ENCODE measurements at regions of chr3 and their contacts with region 1.

Region 1: GRCh38 chr3:139561959-139562676 is 22.6 kb upstream of the RBP1 start:
- DNase-seq: peak; percentile 47 to 55
- H3K4me3 ChIP-seq: no peak overlapping the region
- H3K27ac ChIP-seq: no peak overlapping the region
- H3K4me1 ChIP-seq: peaks cover 33% of the 10 kb centered on the region
- H3K27me3 ChIP-seq: no peaks in the 10 kb centered on the region
- CTCF ChIP-seq: peak; percentile 83

Region 2: DNA sequence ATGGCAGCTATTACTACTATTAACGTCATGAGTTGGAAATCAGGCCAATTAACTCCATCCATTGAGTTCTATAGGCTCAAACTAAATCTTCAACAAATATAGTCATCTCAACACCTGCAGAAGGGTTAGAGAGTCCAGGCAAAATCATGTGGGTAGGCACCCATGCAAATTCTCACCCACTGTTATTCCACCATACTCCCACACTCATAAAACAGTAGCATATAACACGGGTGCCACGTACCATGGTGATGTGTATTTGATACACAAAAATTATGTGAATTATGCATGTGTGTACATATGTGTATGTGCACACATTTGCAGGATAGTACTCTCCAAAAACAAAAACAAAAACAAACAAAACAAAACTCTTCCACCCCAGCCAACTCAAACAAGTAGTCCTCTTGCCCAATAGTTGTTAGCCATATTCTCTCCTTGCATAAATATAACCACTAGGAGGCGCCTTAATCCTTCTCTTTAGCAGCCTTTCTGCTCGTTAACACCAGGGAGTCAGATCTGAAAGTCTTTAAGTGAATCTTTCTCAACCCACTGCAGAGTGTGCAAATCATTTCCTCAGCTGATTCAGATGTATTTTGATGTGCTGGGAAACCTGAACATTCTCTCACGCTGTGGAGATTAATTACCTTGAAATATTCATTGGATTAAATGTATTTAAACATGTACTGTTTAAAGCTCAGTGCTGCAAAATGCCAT is 134.7 kb before region 1 on chr3:
- CTCF ChIA-PET with region 1: interaction called, 11 read pairs
- POLR2A ChIA-PET with region 1: no interaction called
- intact Hi-C with region 1: loop called (anchors 1 kb)
- DNase-seq: peak; percentile 12 to 66
- H3K4me3 ChIP-seq: no peak overlapping the region
- H3K27ac ChIP-seq: no peak overlapping the region
- H3K4me1 ChIP-seq: no peaks in the 10 kb centered on the region
- H3K27me3 ChIP-seq: no peaks in the 10 kb centered on the region
- CTCF ChIP-seq: peak; percentile 91

Region 3: GRCh38 chr3:139473155-139473771 is 88.9 kb before region 1 on chr3:
- CTCF ChIA-PET with region 1: interaction called, 5 read pairs
- POLR2A ChIA-PET with region 1: no interaction called
- intact Hi-C with region 1: loop called (anchors 1 kb)
- DNase-seq: peak; percentile 43 to 87
- H3K4me3 ChIP-seq: no peak overlapping the region
- H3K27ac ChIP-seq: peak overlapping the region; percentile 85
- H3K4me1 ChIP-seq: peaks cover 43% of the 10 kb centered on the region
- H3K27me3 ChIP-seq: no peaks in the 10 kb centered on the region
- CTCF ChIP-seq: no peak

Region 4: DNA sequence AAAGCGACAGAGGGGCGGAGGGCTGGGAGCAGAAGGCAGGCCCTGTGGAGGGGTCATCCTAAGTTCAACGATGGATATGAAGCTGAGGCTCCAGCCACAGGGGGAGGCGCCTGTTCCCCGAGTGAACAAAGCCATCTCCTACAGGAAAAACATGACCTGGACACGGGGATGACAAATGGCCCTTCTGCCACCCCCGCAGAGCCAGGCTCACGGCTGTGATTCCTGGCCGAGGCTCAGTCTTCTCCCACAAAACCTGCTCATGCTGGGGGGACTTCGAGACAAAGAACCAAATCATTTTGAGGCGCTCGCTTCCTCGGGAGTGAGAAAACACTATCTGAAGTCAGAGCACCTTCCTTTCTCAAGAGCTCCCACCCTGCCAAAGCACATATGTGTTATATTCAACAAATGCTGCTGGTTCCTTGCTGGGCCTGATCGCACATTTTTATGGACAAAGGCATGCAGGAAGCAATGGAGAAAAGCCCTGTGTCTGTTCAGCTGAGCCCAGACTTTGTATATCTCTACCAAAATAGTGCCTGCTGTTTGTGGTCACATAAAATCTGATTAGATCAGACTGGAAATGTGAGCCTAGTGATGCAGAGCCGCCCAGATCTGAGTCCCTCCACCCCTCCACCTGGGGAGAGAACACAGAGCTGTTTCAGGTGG is 28.2 kb before region 1 on chr3:
- CTCF ChIA-PET with region 1: no interaction called
- POLR2A ChIA-PET with region 1: no interaction called
- intact Hi-C with region 1: loop called (anchors 1 kb)
- DNase-seq: peak; percentile 67 to 87
- H3K4me3 ChIP-seq: peak overlapping the region; percentile 30; the same call in 1 of the 2 replicates
- H3K27ac ChIP-seq: peak overlapping the region; percentile 94
- H3K4me1 ChIP-seq: peaks cover 64% of the 10 kb centered on the region
- H3K27me3 ChIP-seq: no peaks in the 10 kb centered on the region
- CTCF ChIP-seq: no peak

Measured in PC-9 (cell line).